GM12878 (cell line): ENCODE measurements at regions of chr13 and their contacts with region 1.

Region 1: DNA sequence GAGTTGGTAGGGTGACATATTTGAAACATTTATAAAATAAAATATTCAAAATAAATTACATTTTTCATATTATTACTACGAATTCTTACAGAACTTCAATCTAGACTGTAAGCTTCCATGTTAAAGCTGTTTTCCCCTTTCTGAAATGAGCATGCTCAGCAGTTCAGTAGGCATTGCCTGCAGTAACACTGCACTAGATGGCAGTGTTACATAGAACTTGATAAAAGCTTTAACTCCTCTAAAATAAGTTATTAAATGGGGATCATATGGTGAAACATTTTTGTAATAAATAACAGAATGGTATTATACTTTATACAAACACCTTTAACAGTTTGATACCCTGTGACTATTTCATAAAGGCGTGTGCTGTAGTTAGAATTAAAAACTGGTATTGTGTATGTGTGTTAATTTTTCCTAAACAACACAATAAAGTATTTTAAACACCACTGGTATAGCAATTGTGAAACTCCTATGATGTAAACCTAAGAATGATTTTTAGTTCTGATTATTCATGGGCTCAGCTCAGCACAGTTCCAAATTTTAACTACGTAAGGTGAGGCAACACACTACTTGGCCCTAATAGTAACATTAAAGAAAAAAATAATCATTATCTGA is 11.6 kb upstream of the GPR18 start:
- DNase-seq: no peak
- ATAC-seq: peak; percentile 89
- H3K4me3 ChIP-seq: no peak overlapping the region
- H3K27ac ChIP-seq: peak overlapping the region; percentile 37; the same call in 1 of the 2 replicates
- H3K4me1 ChIP-seq: peaks cover 24% of the 10 kb centered on the region
- H3K27me3 ChIP-seq: no peaks in the 10 kb centered on the region
- CTCF ChIP-seq: peak; percentile 74 to 85 (median 81)
- EP300 ChIP-seq: no peak
- POLR2A ChIP-seq: no peak
- RAD21 ChIP-seq: peak; percentile 91

Region 2: GRCh38 chr13:98869408-98870090 is 400.2 kb before region 1 on chr13:
- CTCF ChIA-PET with region 1: interaction called, 27 read pairs
- POLR2A ChIA-PET with region 1: no interaction called
- RAD21 ChIA-PET with region 1: interaction called, 11 read pairs
- SMC1A ChIA-PET with region 1: interaction called, 14 read pairs
- in situ Hi-C with region 1: no loop called
- intact Hi-C with region 1: loop called (anchors 2 kb)
- DNase-seq: no peak
- ATAC-seq: peak; percentile 63; the same call in 2 of the 3 replicates
- H3K4me3 ChIP-seq: no peak overlapping the region
- H3K27ac ChIP-seq: no peak overlapping the region
- H3K4me1 ChIP-seq: no peaks in the 10 kb centered on the region
- H3K27me3 ChIP-seq: no peaks in the 10 kb centered on the region
- CTCF ChIP-seq: peak in 2 of 3 experiments; percentile 28 to 34; a peak in 4 of 6 replicates
- EP300 ChIP-seq: no peak
- POLR2A ChIP-seq: no peak
- RAD21 ChIP-seq: peak; percentile 26; the same call in 1 of the 2 replicates

Region 3: GRCh38 chr13:99218969-99219368 is 50.8 kb before region 1 on chr13:
- CTCF ChIA-PET with region 1: interaction called, 13 read pairs
- POLR2A ChIA-PET with region 1: no interaction called
- RAD21 ChIA-PET with region 1: interaction called, 4 read pairs
- SMC1A ChIA-PET with region 1: interaction called, 15 read pairs
- in situ Hi-C with region 1: no loop called
- intact Hi-C with region 1: no loop called
- DNase-seq: peak; percentile 62
- ATAC-seq: peak; percentile 67
- H3K4me3 ChIP-seq: no peak overlapping the region
- H3K27ac ChIP-seq: no peak overlapping the region
- H3K4me1 ChIP-seq: peaks cover 10% of the 10 kb centered on the region
- H3K27me3 ChIP-seq: no peaks in the 10 kb centered on the region
- CTCF ChIP-seq: no peak
- EP300 ChIP-seq: no peak
- POLR2A ChIP-seq: no peak
- RAD21 ChIP-seq: no peak

Region 4: GRCh38 chr13:99296398-99296797 is 26.7 kb after region 1 on chr13:
- CTCF ChIA-PET with region 1: interaction called, 61 read pairs
- POLR2A ChIA-PET with region 1: interaction called, 3 read pairs
- RAD21 ChIA-PET with region 1: interaction called, 247 read pairs
- SMC1A ChIA-PET with region 1: interaction called, 264 read pairs
- in situ Hi-C with region 1: no loop called
- intact Hi-C with region 1: loop called (anchors 2 kb)
- DNase-seq: no peak
- ATAC-seq: peak; percentile 15
- H3K4me3 ChIP-seq: peak overlapping the region; percentile 58; the same call in 1 of the 2 replicates
- H3K27ac ChIP-seq: peak overlapping the region; percentile 62
- H3K4me1 ChIP-seq: peaks cover 14% of the 10 kb centered on the region
- H3K27me3 ChIP-seq: no peaks in the 10 kb centered on the region
- CTCF ChIP-seq: no peak
- EP300 ChIP-seq: no peak
- POLR2A ChIP-seq: no peak
- RAD21 ChIP-seq: peak; percentile 2; the same call in 1 of the 2 replicates

Region 5: GRCh38 chr13:99347911-99348451 is 78.2 kb after region 1 on chr13:
- CTCF ChIA-PET with region 1: interaction called, 20 read pairs
- POLR2A ChIA-PET with region 1: no interaction called
- RAD21 ChIA-PET with region 1: interaction called, 40 read pairs
- SMC1A ChIA-PET with region 1: interaction called, 70 read pairs
- in situ Hi-C with region 1: no loop called
- intact Hi-C with region 1: no loop called
- DNase-seq: no peak
- ATAC-seq: peak; percentile 79
- H3K4me3 ChIP-seq: no peak overlapping the region
- H3K27ac ChIP-seq: peak overlapping the region; percentile 54
- H3K4me1 ChIP-seq: peaks cover 31% of the 10 kb centered on the region
- H3K27me3 ChIP-seq: no peaks in the 10 kb centered on the region
- CTCF ChIP-seq: no peak
- EP300 ChIP-seq: no peak
- POLR2A ChIP-seq: no peak
- RAD21 ChIP-seq: no peak

Region 6: GRCh38 chr13:99417201-99418102 is 147.7 kb after region 1 on chr13:
- CTCF ChIA-PET with region 1: interaction called, 38 read pairs
- POLR2A ChIA-PET with region 1: interaction called, 3 read pairs
- RAD21 ChIA-PET with region 1: interaction called, 24 read pairs
- SMC1A ChIA-PET with region 1: interaction called, 22 read pairs
- in situ Hi-C with region 1: no loop called
- intact Hi-C with region 1: no loop called
- DNase-seq: no peak
- ATAC-seq: no peak
- H3K4me3 ChIP-seq: no peak overlapping the region
- H3K27ac ChIP-seq: no peak overlapping the region
- H3K4me1 ChIP-seq: peaks cover 40% of the 10 kb centered on the region
- H3K27me3 ChIP-seq: no peaks in the 10 kb centered on the region
- CTCF ChIP-seq: no peak
- EP300 ChIP-seq: no peak
- POLR2A ChIP-seq: no peak
- RAD21 ChIP-seq: no peak

Region 7: DNA sequence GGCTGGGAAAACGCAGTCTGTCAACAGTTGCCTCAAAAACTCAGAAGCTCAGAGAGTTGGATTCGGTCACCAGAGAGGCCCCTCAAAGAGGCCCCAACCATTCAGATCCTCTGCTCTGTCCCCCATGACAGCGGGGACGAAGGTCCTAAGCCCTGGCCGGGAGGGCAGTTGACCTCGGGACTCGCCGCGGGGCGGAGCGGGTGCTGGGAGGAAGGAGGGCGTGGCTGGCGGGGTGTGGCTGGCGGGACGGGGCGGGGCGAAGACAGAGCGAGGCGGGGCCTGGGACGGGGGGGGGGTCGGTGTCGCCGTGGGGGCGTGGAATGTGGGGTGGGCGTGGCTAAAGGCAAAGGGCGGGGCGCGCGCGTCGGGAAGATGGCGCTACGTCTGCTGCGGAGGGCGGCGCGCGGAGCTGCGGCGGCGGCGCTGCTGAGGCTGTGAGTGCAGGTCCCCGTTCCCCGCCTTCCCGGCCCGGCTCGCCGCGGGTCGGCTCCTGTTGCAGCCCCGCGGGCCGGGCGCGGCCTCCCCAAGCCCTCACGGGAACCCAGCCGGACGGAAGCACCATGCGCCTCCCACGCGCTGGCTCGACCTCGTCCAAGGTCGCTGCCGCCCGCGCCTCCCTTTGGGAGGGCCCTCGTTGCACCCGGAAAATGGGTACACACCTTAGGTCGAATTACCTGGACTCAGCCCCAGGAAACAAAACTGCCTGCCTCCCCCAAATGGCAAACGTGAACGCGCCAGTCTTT is 336.8 kb after region 1 on chr13:
- CTCF ChIA-PET with region 1: no interaction called
- POLR2A ChIA-PET with region 1: no interaction called
- RAD21 ChIA-PET with region 1: no interaction called
- SMC1A ChIA-PET with region 1: interaction called, 4 read pairs
- in situ Hi-C with region 1: no loop called
- intact Hi-C with region 1: loop called (anchors 10 kb)
- DNase-seq: no peak
- ATAC-seq: peak; percentile 94
- H3K4me3 ChIP-seq: peak within 1 kb of the TSS; percentile 92
- H3K27ac ChIP-seq: peak within 1 kb of the TSS; percentile 83
- H3K4me1 ChIP-seq: peaks cover 7% of the 10 kb centered on the region
- H3K27me3 ChIP-seq: no peaks in the 10 kb centered on the region
- CTCF ChIP-seq: no peak
- EP300 ChIP-seq: no peak
- POLR2A ChIP-seq: peak; percentile 94
- RAD21 ChIP-seq: no peak